ENCODE measurements at regions of chr9 and their contacts with region 1.

Region 1: DNA sequence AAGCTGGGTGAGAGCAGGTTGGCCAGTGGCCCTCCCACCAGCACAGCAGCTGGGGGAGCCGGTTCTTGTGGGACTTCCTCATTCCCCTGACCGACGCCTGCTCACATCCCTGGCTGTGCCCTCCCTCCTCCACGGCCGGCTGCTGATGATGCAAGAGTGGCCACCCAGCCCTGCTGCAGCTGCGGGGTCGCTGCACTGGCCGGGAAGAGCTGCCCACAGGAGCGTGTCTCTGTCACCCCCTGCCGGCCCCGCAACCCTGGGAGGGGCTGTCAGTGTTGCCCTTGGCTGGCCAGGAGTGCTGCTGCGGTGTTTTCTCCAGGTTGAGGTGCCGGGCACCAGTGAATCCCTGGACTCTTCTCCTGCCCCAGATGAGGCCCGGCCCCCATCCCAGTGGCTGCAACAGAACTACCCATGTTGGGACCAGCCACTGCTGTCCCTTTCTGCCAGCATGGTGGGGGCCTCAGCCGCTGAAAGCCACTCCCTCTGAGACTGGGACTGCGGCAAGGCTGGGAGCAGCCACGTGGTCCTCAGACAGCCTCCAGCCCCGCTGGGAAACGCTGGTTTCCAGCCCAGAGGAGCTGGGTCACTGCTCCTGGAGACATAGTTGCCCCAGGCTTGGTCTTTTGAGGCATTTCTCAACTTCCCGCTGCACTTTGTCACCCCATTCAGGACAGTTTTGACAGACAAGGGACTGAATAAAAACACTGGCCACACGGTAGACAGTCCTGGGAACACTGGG is 739 bp downstream of the CARD9 start:
- DNase-seq: peak; percentile 89 to 91
- H3K4me3 ChIP-seq: peak overlapping the region; percentile 38; the same call in 1 of the 2 replicates
- H3K27ac ChIP-seq: peak overlapping the region; percentile 81
- H3K4me1 ChIP-seq: peaks cover 25% of the 10 kb centered on the region
- H3K27me3 ChIP-seq: no peaks in the 10 kb centered on the region
- CTCF ChIP-seq: peak; percentile 36

Region 2: GRCh38 chr9:136312436-136312835 is 60.3 kb before region 1 on chr9:
- CTCF ChIA-PET with region 1: no interaction called
- POLR2A ChIA-PET with region 1: no interaction called
- intact Hi-C with region 1: loop called (anchors 5 kb)
- DNase-seq: peak in 1 of 2 experiments; percentile 69
- H3K4me3 ChIP-seq: no peak overlapping the region
- H3K27ac ChIP-seq: no peak overlapping the region
- H3K4me1 ChIP-seq: peaks cover 10% of the 10 kb centered on the region
- H3K27me3 ChIP-seq: peaks cover 7% of the 10 kb centered on the region; the same call in 1 of the 2 replicates
- CTCF ChIP-seq: peak; percentile 77

Region 3: GRCh38 chr9:136339173-136339957 is 33.4 kb before region 1 on chr9:
- CTCF ChIA-PET with region 1: no interaction called
- POLR2A ChIA-PET with region 1: interaction called, 3 read pairs
- intact Hi-C with region 1: loop called (anchors 2 kb)
- DNase-seq: peak; percentile 56 to 85
- H3K4me3 ChIP-seq: no peak overlapping the region
- H3K27ac ChIP-seq: no peak overlapping the region
- H3K4me1 ChIP-seq: no peaks in the 10 kb centered on the region
- H3K27me3 ChIP-seq: no peaks in the 10 kb centered on the region
- CTCF ChIP-seq: peak; percentile 97

Measured in PC-9 (cell line).